ENCODE measurements at regions of chr14 and their contacts with region 1.

Region 1: DNA sequence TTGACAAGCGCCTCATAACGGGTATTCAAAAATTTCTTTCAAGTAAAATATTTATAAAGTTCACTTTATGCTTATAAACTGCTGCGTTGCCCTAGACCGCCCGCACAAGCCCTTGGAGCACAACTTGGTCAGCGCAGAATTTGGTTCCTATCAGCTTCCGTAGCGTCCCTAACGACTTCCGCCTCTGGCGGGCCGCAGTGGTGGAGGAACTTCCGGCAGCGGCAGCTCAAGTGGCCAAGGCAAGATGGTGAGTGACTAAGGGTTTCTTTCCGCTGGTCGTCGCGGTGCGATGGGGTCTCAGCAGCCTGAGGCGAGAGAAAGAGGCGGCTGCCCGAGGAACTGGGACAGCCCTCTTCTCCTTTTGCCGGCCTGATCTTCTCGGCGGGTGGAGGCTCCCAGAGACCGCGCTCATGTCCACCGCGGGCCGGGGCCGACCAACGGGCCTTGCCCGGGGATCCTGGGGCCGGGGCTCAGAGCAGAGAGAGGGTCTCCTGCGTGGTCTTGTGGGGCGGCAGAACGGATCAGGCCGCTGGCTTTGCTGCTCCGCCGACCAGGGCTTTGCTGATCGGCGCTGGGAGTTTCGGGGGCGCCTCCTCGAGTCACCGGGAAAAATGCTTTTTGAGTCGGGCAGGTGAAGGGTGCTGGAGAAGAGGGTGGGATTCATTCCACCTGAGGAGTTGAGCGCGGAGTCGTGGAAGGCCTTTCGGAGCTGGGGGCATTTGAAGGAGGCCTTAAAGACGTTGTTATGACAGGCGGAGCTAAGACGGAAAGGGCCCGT is at the start of gene PSMC1:
- DNase-seq: peak; percentile 83
- H3K4me3 Mint-ChIP-seq: peak within 1 kb of the TSS; percentile 99
- H3K27ac Mint-ChIP-seq: peak within 1 kb of the TSS; percentile 93
- H3K4me1 Mint-ChIP-seq: peaks cover 22% of the 10 kb centered on the region
- H3K27me3 Mint-ChIP-seq: peaks cover 6% of the 10 kb centered on the region
- total RNA-seq, gene PSMC1: 171 and 176 TPM in 2 replicates

Region 2: DNA sequence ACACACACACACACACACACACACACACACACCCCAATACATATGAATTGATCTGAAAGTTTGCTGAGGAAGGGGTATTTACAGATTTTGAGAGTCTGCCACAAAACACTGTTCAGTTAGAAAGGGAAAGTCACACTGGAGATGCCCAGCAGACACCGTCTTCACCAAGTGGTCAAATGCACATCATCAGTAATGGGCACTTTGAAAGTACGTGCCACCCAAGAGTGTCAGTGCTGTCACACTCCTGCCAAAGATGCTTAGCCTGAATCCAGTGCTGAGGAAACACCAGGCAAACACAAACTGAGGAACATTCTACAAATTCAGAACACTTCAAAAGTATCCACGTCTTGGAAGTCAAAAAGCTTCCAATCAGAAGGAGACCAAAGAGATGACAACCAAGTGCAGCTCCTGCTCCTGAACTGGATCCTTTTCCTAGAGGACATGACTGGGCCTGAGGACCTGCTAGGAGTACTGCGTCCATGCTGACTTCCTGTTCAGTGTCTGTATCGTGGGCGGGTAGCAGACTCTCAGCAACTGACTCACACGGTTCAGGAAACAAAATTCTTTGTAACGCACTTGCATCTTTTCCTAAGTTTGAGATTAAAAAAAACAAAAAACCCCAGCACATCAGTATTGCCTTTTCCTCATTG is 18.4 kb after region 1 on chr14:
- intact Hi-C with region 1: loop called (anchors 2 kb)
- DNase-seq: no peak
- H3K4me3 Mint-ChIP-seq: peak overlapping the region; percentile 22
- H3K27ac Mint-ChIP-seq: peak overlapping the region; percentile 79
- H3K4me1 Mint-ChIP-seq: peaks cover 27% of the 10 kb centered on the region
- H3K27me3 Mint-ChIP-seq: no peaks in the 10 kb centered on the region

Measured in activated T-helper 1 cell treated with anti-CD3 and anti-CD28 coated beads, Interleukin-12 subunit alpha, Interleukin-12 subunit beta, Interleukin-2, Interleukin-4 antibody, amounts not matched to agents 30 ng/mL and 10 ng/mL and 1 ng/mL, durations not matched to agents 14 hours and 24 hours and 36 hours (primary cell).